PC-3 (cell line): ENCODE measurements at regions of chr17 and their contacts with region 1.

Region 1: DNA sequence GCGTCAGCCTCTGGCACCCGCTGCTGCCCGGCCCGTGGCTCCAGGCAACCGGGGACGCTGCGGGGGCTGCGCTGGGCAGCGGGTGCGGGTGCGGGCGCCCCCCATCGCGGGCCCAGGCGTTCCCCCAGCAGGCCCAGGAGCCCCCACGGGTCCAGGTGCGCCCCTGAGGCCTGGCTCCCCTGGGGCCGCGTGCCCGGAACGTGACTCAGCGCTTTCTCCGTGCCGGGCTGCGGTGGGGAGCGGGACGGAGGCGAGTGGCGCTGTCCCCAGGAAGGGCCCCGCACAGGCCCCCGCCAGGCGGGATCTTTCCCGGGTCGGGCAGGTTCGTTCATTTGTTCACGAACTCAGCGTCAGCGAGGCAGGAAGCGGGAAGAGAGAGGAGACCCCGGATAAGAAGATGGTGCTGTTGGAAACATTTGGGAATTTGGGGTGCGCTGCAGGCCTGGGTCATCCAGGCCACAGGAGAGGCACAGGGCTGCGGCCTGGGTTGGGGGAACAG is 18.4 kb upstream of the EXOC7 start:
- DNase-seq: no peak
- ATAC-seq: no peak
- H3K4me3 ChIP-seq: no peak overlapping the region
- H3K27ac ChIP-seq: no peak overlapping the region
- H3K4me1 ChIP-seq: peaks cover 4% of the 10 kb centered on the region; the same call in 1 of the 2 replicates
- H3K27me3 ChIP-seq: no peaks in the 10 kb centered on the region
- CTCF ChIP-seq: no peak

Region 2: DNA sequence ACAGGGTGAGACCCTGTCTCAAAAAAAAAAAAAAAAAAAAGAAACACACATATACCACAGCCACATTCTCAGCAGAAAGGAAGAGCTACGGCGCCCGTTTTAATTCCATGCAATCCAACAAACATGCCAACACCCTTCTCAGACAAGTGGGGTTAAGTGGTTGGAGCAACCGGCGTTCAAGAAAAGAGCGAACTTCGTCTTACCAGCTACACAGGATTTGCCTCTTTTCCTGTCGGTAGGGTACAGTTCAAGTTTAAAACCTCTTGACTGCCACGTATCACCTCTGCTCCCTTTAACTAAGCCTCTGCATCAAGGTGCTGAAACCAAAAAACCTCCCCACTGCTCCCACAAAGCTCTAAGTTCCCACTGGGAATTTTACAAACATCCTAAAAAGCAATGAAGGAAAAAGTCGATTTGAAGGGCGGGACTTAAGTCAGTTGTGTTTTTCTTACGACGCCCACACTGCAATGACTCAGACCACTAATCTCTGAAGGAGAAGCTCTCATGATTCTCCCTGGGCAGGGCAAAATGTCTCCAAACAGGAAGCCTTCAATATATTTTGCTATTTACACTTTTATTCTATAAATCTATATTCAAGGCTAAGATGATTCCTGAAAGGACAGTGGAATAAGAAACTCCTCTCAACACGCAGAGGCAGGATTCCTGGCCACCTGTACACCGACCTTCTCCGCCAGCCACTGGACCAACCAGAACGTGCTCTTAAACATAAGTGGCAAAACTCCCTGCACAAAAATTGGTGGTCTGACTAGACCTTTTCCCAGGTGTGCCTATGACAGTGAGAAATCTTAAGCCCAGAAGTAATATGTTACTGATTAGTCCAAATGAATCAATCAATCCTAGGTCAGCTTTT is 68.5 kb before region 1 on chr17:
- CTCF ChIA-PET with region 1: no interaction called
- POLR2A ChIA-PET with region 1: no interaction called
- intact Hi-C with region 1: no loop called
- DNase-seq: peak; percentile 75
- ATAC-seq: peak; percentile 51
- H3K4me3 ChIP-seq: peak overlapping the region; percentile 37
- H3K27ac ChIP-seq: peak overlapping the region; percentile 83
- H3K4me1 ChIP-seq: peaks cover 38% of the 10 kb centered on the region
- H3K27me3 ChIP-seq: no peaks in the 10 kb centered on the region
- CTCF ChIP-seq: no peak

Region 3: DNA sequence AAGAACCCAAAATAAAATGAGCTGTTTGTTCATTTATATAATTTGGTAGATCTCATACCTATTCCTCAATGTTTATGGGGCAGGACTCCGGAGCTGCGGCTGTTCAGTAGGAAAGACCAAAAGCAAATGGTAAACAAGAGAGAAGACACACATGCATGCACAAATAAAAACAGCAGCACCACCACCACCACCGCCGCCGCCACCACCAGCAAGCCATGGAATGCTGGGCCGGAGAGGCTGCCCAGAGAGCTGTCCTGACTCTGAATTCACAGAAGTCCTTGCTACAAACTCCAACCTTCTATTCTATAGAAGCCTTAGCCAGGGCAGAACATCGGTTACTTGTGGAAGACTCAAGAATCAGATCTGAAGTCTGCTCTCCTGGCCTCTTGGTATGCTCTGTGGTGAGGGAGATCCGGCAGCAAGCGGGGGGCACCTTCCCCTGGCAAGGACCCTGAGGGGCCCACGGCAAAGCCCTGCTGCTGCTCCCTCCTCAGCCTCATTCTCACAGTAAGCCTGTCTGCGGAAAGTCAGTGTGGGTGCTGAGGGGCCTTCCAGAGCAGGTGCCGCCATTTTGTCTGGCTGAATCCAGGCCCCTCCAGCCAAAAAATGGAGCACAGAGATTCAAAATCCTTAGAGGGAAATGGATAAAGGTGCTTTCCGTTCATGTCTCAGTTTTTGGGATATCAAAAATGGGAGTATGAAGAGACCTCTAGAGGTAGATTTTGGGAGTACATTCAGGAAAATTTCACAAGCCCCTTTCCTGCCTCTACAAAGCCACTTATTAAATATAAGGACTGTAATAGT is 25.4 kb after region 1 on chr17:
- CTCF ChIA-PET with region 1: no interaction called
- POLR2A ChIA-PET with region 1: no interaction called
- intact Hi-C with region 1: loop called (anchors 1 kb)
- DNase-seq: peak; percentile 78
- ATAC-seq: peak; percentile 39
- H3K4me3 ChIP-seq: no peak overlapping the region
- H3K27ac ChIP-seq: no peak overlapping the region
- H3K4me1 ChIP-seq: peaks cover 13% of the 10 kb centered on the region
- H3K27me3 ChIP-seq: no peaks in the 10 kb centered on the region
- CTCF ChIP-seq: peak; percentile 82

Region 4: GRCh38 chr17:76182016-76182764 is 60.2 kb after region 1 on chr17:
- CTCF ChIA-PET with region 1: interaction called, 10 read pairs
- POLR2A ChIA-PET with region 1: no interaction called
- intact Hi-C with region 1: loop called (anchors 1 kb)
- DNase-seq: peak; percentile 98
- ATAC-seq: peak; percentile 93
- H3K4me3 ChIP-seq: no peak overlapping the region
- H3K27ac ChIP-seq: no peak overlapping the region
- H3K4me1 ChIP-seq: peaks cover 7% of the 10 kb centered on the region
- H3K27me3 ChIP-seq: no peaks in the 10 kb centered on the region
- CTCF ChIP-seq: peak; percentile 97

Region 5: GRCh38 chr17:76278952-76279741 is 157.2 kb after region 1 on chr17:
- CTCF ChIA-PET with region 1: interaction called, 15 read pairs
- POLR2A ChIA-PET with region 1: no interaction called
- intact Hi-C with region 1: loop called (anchors 1 kb)
- DNase-seq: peak; percentile 97
- ATAC-seq: peak; percentile 94
- H3K4me3 ChIP-seq: no peak overlapping the region
- H3K27ac ChIP-seq: no peak overlapping the region
- H3K4me1 ChIP-seq: peaks cover 13% of the 10 kb centered on the region
- H3K27me3 ChIP-seq: no peaks in the 10 kb centered on the region
- CTCF ChIP-seq: peak; percentile 99